Common myeloid progenitor, CD34-positive (primary cell): ENCODE measurements at regions of chr7 and their contacts with region 1.

Region 1: GRCh38 chr7:2608921-2609411 is 22.8 kb upstream of the TTYH3 start:
- DNase-seq: peak; percentile 90 to 96 (median 95)
- H3K4me3 ChIP-seq: peak overlapping the region in 4 of 7 experiments; percentile 22 to 56 (median 47)
- H3K27ac ChIP-seq: no peak overlapping the region
- H3K4me1 ChIP-seq: peaks cover 0 to 55% (median 40%) of the 10 kb centered on the region in 4 experiments
- H3K27me3 ChIP-seq: no peaks in the 10 kb centered on the region

Region 2: GRCh38 chr7:2631946-2632732 is 23.2 kb after region 1 on chr7 and contains the start of gene TTYH3:
- CTCF ChIA-PET with region 1: interaction called, 114 read pairs
- POLR2A ChIA-PET with region 1: no interaction called
- DNase-seq: peak in 1 of 3 donors; percentile 18
- H3K4me3 ChIP-seq: peak within 1 kb of the TSS; percentile 53 to 95 (median 84)
- H3K27ac ChIP-seq: peak within 1 kb of the TSS; percentile 54 to 83
- H3K4me1 ChIP-seq: peaks cover 0 to 55% (median 38%) of the 10 kb centered on the region in 4 experiments
- H3K27me3 ChIP-seq: no peaks in the 10 kb centered on the region

Region 3: DNA sequence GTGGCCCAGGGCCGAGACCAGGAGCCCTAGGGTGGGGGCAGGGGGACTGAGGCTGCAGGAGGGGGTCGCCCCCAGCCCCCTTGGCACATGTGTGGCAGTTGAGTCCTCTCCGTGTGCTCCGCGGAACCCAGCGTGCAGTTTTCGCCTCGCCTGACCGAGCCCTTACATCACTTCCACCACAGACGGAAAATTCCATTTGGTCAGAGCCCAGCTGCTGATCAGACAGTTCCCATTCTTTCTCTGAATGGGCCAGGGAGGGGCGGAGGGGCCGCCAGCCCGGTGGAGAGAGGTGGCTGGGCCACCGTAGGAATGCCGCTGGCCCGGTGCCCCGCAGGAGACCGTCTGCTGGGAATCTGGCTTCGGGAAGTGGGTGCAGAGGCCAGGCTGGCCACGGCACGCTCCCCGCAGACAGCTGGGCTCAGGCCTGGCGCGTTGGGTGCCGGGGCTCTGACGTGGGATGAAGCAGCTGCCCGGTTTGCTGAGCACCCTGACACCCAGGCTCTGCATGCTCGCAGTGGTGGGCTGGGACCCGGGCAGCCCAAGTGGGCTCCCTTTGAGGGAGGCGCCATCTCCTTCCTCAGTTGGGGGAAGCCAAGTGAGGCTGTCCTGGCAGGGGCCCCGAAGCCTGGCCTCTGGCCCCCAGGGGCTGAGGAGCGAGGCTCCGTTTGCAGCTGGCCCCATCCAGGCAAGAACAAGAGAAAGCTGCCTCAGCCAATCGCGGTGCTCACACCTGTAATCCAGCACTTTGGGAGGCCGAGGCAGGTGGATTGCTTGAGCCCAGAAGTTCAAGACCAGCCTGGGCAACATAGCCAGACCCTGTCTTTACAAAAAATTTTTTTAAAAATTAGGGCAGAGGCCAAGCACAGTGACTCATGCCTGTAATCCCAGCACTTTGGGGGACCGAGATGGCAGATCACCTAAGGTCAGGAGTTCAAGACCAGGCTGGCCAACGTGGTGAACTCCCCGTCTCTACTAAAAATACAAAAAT is 32.7 kb after region 1 on chr7:
- CTCF ChIA-PET with region 1: interaction called, 17 read pairs
- POLR2A ChIA-PET with region 1: interaction called, 3 read pairs
- DNase-seq: peak; percentile 17 to 63 (median 58)
- H3K4me3 ChIP-seq: no peak overlapping the region
- H3K27ac ChIP-seq: no peak overlapping the region
- H3K4me1 ChIP-seq: peaks cover 0 to 75% (median 52%) of the 10 kb centered on the region in 4 experiments
- H3K27me3 ChIP-seq: no peaks in the 10 kb centered on the region